Cardiac septum (tissue), 1 donor: ENCODE measurements at regions of chr14 and their contacts with region 1.

Region 1: GRCh38 chr14:50060871-50061663 is 55.3 kb downstream of the VCPKMT start:
- DNase-seq: no peak

Region 2: GRCh38 chr14:50023671-50024490 is 37.2 kb before region 1 on chr14:
- intact Hi-C with region 1: loop called (anchors 5 kb)
- DNase-seq: no peak